HCT116 (cell line): ENCODE measurements at regions of chr5 and their contacts with region 1.

Region 1: GRCh38 chr5:42908509-42909488 is 97.1 kb upstream of the SELENOP start:
- DNase-seq: peak; percentile 76
- ATAC-seq: peak; percentile 93
- H3K4me3 ChIP-seq: no peak overlapping the region
- H3K27ac ChIP-seq: no peak overlapping the region
- H3K4me1 ChIP-seq: peaks cover 0 to 12% of the 10 kb centered on the region in 2 experiments; a peak in 3 of 4 replicates
- H3K27me3 ChIP-seq: no peaks in the 10 kb centered on the region
- CTCF ChIP-seq: peak; percentile 51 to 76 (median 76); a peak in 5 of 6 replicates
- POLR2A ChIP-seq: no peak
- RAD21 ChIP-seq: peak; percentile 60

Region 2: GRCh38 chr5:42570966-42571960 is 337.5 kb before region 1 on chr5:
- CTCF ChIA-PET with region 1: no interaction called
- POLR2A ChIA-PET with region 1: no interaction called
- RAD21 ChIA-PET with region 1: no interaction called
- intact Hi-C with region 1: no loop called
- DNase-seq: no peak
- ATAC-seq: no peak
- H3K4me3 ChIP-seq: no peak overlapping the region
- H3K27ac ChIP-seq: no peak overlapping the region
- H3K4me1 ChIP-seq: no peaks in the 10 kb centered on the region
- H3K27me3 ChIP-seq: peaks cover 10% of the 10 kb centered on the region
- CTCF ChIP-seq: no peak
- POLR2A ChIP-seq: no peak
- RAD21 ChIP-seq: no peak

Region 3: DNA sequence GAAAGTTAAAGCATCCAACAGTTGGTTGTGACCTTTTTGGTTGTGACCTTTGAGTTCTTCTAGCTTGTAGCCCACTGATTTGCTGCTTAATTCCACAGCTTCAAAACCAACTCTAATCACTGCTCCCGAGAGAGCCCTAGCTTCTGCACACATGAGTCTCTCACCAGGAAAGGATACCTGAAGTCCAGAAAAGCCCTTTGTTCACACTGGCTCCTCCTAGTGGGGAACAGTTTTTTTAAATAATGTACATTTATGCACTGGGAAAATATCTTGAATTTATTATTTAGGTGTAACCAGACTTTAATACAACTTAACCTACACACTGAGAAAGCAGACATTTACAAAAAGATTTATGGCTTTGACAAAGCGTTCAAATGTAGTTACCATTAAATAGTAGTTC is 272.4 kb before region 1 on chr5:
- CTCF ChIA-PET with region 1: no interaction called
- POLR2A ChIA-PET with region 1: no interaction called
- RAD21 ChIA-PET with region 1: no interaction called
- intact Hi-C with region 1: no loop called
- DNase-seq: peak; percentile 22
- ATAC-seq: peak; percentile 86
- H3K4me3 ChIP-seq: no peak overlapping the region
- H3K27ac ChIP-seq: no peak overlapping the region
- H3K4me1 ChIP-seq: no peaks in the 10 kb centered on the region
- H3K27me3 ChIP-seq: no peaks in the 10 kb centered on the region; the same call in 1 of the 2 replicates
- CTCF ChIP-seq: peak; percentile 17 to 51 (median 37); a peak in 4 of 6 replicates
- POLR2A ChIP-seq: no peak
- RAD21 ChIP-seq: peak; percentile 23

Region 4: DNA sequence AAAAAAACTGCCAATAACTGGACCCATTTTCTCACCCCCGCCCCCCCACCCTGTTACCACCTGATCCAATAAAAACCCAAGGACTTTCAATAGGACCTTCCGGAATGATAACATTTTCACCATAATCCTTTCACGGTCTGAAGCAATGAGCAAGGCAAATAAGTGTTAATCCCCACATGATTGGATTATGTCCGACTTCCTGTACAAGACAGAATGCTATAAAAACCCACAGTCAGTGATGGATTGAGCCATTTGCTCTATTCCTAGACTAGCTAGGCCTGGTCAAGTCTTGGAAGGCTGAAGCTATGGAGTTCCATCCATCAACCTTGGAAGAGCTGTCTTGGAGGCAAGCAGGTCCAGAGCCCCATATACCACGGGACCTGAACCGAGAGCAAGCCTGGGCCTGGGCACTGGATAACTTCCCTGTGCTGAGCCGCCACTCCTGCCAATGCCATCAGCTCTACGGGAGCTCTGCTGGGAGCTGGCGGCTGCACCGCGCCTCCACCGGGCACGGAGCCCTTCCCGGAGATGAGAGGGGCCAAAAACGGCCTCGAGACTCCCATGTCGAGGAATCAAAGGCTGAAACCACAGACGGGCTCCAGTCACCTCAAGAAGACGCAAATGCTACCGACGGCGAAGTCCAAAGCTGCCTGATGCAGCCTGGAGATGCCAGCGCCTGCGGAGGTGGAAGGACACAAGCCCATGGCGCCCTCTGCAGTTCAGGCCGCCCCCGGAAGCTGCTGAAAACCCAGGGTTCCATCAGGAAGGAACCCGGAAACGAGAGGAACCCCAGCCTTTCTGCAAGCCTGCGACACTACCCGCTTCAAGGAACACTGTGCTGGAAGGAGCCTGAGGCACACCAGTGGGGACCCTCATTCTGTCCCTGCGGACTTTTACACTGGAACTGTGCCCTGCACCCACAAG is 62.1 kb after region 1 on chr5:
- CTCF ChIA-PET with region 1: interaction called, 47 read pairs
- POLR2A ChIA-PET with region 1: interaction called, 3 read pairs
- RAD21 ChIA-PET with region 1: interaction called, 6 to 22 read pairs
- intact Hi-C with region 1: loop called (anchors 1 kb)
- DNase-seq: no peak
- ATAC-seq: peak; percentile 84
- H3K4me3 ChIP-seq: no peak overlapping the region
- H3K27ac ChIP-seq: no peak overlapping the region
- H3K4me1 ChIP-seq: peaks cover 0 to 5% of the 10 kb centered on the region in 2 experiments; a peak in 1 of 4 replicates
- H3K27me3 ChIP-seq: no peaks in the 10 kb centered on the region
- CTCF ChIP-seq: peak; percentile 50 to 57 (median 52); a peak in 5 of 6 replicates
- POLR2A ChIP-seq: no peak
- RAD21 ChIP-seq: peak; percentile 76

Region 5: GRCh38 chr5:43040287-43041098 is 131.7 kb after region 1 on chr5 and contains the start of gene ANXA2R:
- CTCF ChIA-PET with region 1: interaction called, 18 read pairs
- POLR2A ChIA-PET with region 1: interaction called, 3 read pairs
- RAD21 ChIA-PET with region 1: interaction called in 1 of 2 experiments, 4 read pairs
- intact Hi-C with region 1: loop called (anchors 1 kb)
- DNase-seq: peak; percentile 92
- ATAC-seq: peak; percentile 59
- H3K4me3 ChIP-seq: peak within 1 kb of the TSS; percentile 58 to 65
- H3K27ac ChIP-seq: peak within 1 kb of the TSS; percentile 81
- H3K4me1 ChIP-seq: peaks cover 0 to 39% of the 10 kb centered on the region in 2 experiments; a peak in 3 of 4 replicates
- H3K27me3 ChIP-seq: no peaks in the 10 kb centered on the region
- CTCF ChIP-seq: peak; percentile 70 to 77 (median 76)
- POLR2A ChIP-seq: no peak
- RAD21 ChIP-seq: peak; percentile 77
- total RNA-seq, gene ANXA2R: 0.37 TPM

Region 6: GRCh38 chr5:43105369-43106289 is 196.8 kb after region 1 on chr5:
- CTCF ChIA-PET with region 1: no interaction called
- POLR2A ChIA-PET with region 1: no interaction called
- RAD21 ChIA-PET with region 1: no interaction called
- intact Hi-C with region 1: loop called (anchors 1 kb)
- DNase-seq: peak; percentile 92
- ATAC-seq: peak; percentile 95
- H3K4me3 ChIP-seq: peak overlapping the region; percentile 8 to 29; a peak in 3 of 4 replicates
- H3K27ac ChIP-seq: no peak overlapping the region
- H3K4me1 ChIP-seq: peaks cover 0 to 10% of the 10 kb centered on the region in 2 experiments; a peak in 1 of 4 replicates
- H3K27me3 ChIP-seq: no peaks in the 10 kb centered on the region
- CTCF ChIP-seq: peak; percentile 99 to 100 (median 100)
- POLR2A ChIP-seq: no peak
- RAD21 ChIP-seq: peak; percentile 75

Region 7: GRCh38 chr5:43305948-43306565 is 397.3 kb after region 1 on chr5:
- CTCF ChIA-PET with region 1: no interaction called
- POLR2A ChIA-PET with region 1: no interaction called
- RAD21 ChIA-PET with region 1: no interaction called
- intact Hi-C with region 1: loop called (anchors 10 kb)
- DNase-seq: peak; percentile 41
- ATAC-seq: peak; percentile 81
- H3K4me3 ChIP-seq: no peak overlapping the region
- H3K27ac ChIP-seq: no peak overlapping the region
- H3K4me1 ChIP-seq: no peaks in the 10 kb centered on the region
- H3K27me3 ChIP-seq: no peaks in the 10 kb centered on the region
- CTCF ChIP-seq: peak; percentile 57 to 79 (median 70); a peak in 5 of 6 replicates
- POLR2A ChIP-seq: no peak
- RAD21 ChIP-seq: peak; percentile 51